Activated CD4-positive, alpha-beta T cell treated with anti-CD3 and anti-CD28 coated beads, Interleukin-2, amount 10 ng/mL, durations not matched to agents 7 days and 5 days (primary cell): ENCODE measurements at regions of chr15 and their contacts with region 1.

Region 1: DNA sequence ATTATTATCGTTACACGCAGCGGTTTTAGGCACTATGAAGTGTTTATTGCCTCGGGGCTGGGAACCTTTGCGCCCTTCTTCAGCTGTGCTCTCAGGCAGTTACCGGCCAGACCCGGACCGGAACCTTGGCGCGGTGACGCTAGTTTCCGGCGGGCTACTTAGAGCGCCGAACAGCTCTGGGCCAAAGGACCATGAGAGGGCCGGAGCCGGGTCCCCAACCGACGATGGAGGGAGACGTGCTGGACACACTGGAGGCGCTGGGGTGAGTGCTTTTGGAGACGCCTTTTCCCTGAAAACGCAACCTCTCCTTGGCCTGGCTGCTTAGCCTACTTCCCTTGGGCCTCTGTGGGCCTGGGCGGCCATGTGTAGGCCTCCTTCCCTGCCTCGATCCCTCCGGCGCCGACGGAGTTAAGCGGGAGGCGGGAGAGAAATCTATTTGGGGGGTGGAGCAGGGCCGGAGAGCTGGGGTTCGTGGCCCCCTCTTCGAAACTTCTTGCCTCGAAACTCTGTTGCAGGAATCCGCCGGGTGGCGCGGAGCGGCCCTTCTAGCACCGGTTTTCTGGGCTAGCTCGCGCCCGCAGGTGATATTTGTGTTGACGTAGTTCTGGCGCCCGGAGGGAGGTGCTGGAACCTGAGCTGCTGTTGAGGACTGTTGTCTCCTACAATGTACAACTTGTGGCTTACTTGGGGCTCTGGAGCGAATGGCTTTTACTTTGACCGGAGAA is at the start of gene FAM98B:
- DNase-seq: peak; percentile 84
- H3K4me3 Mint-ChIP-seq: peak within 1 kb of the TSS; percentile 99
- H3K27ac Mint-ChIP-seq: peak within 1 kb of the TSS; percentile 96
- H3K4me1 Mint-ChIP-seq: peaks cover 33% of the 10 kb centered on the region
- H3K27me3 Mint-ChIP-seq: peaks cover 17% of the 10 kb centered on the region
- total RNA-seq, gene FAM98B: 34.7 to 42.9 TPM

Region 2: DNA sequence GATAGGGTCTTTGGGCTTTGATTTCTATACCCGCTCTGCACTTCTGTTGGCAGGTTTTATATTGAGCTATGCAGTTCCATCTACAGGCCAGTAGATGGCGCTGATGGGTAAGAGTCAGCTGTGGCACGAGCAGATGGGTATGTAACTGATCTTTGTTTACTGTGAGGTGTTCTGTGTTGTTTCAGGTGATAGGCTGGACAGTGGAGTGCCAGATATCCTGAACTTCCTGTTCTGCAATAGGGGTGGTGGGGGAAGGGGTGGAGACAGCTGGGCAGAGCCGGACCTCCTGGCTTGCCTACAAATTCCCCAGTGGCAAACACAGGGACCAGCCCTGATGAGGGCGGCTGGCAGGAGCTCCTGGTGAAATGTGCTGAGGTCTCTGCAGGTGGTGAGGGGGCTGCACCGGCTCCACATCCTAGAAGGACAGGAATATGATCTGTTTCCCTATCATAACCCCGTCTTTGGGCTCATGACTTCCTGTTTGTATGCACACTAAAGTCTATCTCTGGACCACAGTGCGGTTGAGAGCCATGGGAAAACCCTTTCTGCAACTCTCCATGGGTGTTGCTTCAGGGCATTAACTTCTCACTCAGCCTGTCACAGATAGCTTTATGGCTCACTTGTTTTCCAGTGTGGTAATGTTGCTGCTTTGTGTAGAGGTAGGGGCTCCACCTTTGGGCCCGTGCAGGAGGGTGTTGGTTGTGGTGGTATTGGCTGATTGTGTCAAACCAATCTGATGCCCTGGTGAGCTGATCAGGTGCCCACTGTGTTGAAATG is 13.6 kb before region 1 on chr15:
- CTCF ChIA-PET with region 1: interaction called, 17 read pairs
- POLR2A ChIA-PET with region 1: no interaction called
- DNase-seq: peak; percentile 66
- H3K4me3 Mint-ChIP-seq: no peak overlapping the region
- H3K27ac Mint-ChIP-seq: peak overlapping the region; percentile 60
- H3K4me1 Mint-ChIP-seq: peaks cover 7% of the 10 kb centered on the region
- H3K27me3 Mint-ChIP-seq: peaks cover 41% of the 10 kb centered on the region

Region 3: GRCh38 chr15:38474155-38474757 is 20.1 kb after region 1 on chr15:
- CTCF ChIA-PET with region 1: interaction called, 11 read pairs
- POLR2A ChIA-PET with region 1: no interaction called
- DNase-seq: peak; percentile 57
- H3K4me3 Mint-ChIP-seq: no peak overlapping the region
- H3K27ac Mint-ChIP-seq: peak overlapping the region; percentile 74
- H3K4me1 Mint-ChIP-seq: peaks cover 13% of the 10 kb centered on the region
- H3K27me3 Mint-ChIP-seq: no peaks in the 10 kb centered on the region